ENCODE measurements at regions of chr18 and their contacts with region 1.

Region 1: DNA sequence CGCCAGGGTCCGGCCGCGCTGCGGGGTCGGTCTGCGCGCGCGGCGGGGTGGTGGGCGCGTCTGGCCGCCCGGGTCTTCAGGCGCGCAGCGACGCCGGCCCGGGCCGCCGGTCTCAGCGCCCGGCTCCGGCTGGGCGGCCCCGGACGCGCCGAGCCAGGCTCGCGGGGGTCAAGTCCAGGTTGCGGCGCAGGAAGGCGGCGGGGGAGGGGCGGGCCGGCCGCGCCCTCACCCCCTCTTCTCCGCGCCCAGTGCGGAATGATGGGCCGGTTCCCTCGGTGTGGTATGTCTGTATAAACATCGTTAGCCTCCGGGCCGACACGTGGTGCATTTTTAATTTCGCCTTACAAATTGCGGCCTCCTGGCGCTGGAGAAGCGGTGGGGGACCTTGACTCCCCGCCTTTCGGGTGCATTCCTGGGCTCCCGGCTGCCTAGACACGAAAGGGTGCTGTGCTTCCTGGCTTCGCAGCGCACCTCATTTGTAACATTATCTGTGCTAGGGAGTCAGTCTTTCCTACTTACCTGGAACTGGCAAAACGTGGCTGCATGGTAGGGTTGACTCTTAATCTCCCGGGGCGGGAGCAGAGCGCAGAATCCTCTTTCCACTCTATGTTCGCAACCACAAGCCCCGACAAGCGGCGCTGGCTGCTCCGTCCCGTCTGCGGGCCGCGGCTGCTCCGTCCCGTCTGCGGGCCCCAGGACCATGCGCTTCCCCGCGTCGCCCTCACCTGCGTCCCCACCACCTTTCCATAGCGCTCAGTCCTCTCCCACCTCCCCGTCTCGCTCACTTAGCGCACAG is 69.0 kb downstream of the CTAGE1 start:
- DNase-seq: peak; percentile 56
- H3K4me3 ChIP-seq: peak overlapping the region in 2 of 3 experiments; percentile 33 to 35
- H3K27ac ChIP-seq: peak overlapping the region; percentile 67
- H3K4me1 ChIP-seq: peaks cover 56% of the 10 kb centered on the region
- H3K27me3 ChIP-seq: no peaks in the 10 kb centered on the region
- CTCF ChIP-seq: no peak
- POLR2A ChIP-seq: no peak

Region 2: GRCh38 chr18:22194151-22194598 is 154.5 kb before region 1 on chr18:
- CTCF ChIA-PET with region 1: interaction called, 3 read pairs
- POLR2A ChIA-PET with region 1: no interaction called
- dilution Hi-C with region 1: no loop called
- intact Hi-C with region 1: loop called (anchors 5 kb)
- DNase-seq: peak; percentile 79
- H3K4me3 ChIP-seq: no peak overlapping the region
- H3K27ac ChIP-seq: peak overlapping the region; percentile 83
- H3K4me1 ChIP-seq: peaks cover 62% of the 10 kb centered on the region
- H3K27me3 ChIP-seq: no peaks in the 10 kb centered on the region
- CTCF ChIP-seq: no peak
- POLR2A ChIP-seq: no peak

Region 3: GRCh38 chr18:22314420-22314819 is 34.3 kb before region 1 on chr18:
- CTCF ChIA-PET with region 1: no interaction called
- POLR2A ChIA-PET with region 1: no interaction called
- dilution Hi-C with region 1: no loop called
- intact Hi-C with region 1: no loop called
- DNase-seq: no peak
- H3K4me3 ChIP-seq: no peak overlapping the region
- H3K27ac ChIP-seq: no peak overlapping the region
- H3K4me1 ChIP-seq: no peaks in the 10 kb centered on the region
- H3K27me3 ChIP-seq: no peaks in the 10 kb centered on the region
- CTCF ChIP-seq: no peak
- POLR2A ChIP-seq: no peak

Region 4: DNA sequence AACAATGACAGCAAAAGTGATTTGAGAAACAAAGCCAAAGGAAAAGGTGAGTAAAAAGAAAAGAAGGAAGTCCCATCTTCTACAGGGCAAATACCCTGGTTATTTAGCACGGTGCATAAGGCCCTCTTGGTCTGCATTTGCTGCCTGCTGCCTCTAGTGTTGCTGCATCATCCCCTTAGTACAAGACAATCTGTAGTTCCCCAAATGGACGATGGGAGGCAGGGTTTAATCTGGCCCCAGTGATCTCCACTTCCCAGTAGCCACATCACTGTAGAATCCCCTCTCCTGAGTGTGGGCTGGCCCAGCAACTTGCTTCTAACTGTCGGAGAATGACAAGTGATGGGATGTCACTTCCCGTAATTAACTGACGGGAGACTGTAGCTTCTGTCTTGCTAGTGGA is 16.1 kb before region 1 on chr18:
- CTCF ChIA-PET with region 1: interaction called, 12 read pairs
- POLR2A ChIA-PET with region 1: no interaction called
- dilution Hi-C with region 1: no loop called
- intact Hi-C with region 1: no loop called
- DNase-seq: no peak
- H3K4me3 ChIP-seq: no peak overlapping the region
- H3K27ac ChIP-seq: no peak overlapping the region
- H3K4me1 ChIP-seq: peaks cover 10% of the 10 kb centered on the region
- H3K27me3 ChIP-seq: no peaks in the 10 kb centered on the region
- CTCF ChIP-seq: no peak
- POLR2A ChIP-seq: no peak

Region 5: DNA sequence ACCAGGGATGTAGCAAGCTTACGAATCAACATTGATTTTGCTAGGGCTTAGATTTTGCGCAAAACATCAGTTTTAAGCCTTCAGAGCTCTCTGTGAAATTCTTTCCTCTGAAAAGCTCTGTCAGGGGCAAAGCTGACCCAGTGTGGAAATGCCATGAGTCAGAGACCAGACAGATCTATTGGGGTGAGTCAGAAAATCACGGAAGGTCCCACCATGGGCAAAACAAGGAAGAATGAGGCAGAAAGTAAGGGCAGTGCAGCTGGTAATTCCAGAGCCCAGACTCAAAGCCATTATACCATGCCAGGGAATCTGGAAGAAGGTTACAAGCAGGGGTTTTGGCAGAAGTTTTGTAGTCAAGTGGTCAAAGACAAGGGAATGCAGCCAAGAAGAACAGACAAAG is 325.6 kb after region 1 on chr18:
- CTCF ChIA-PET with region 1: no interaction called
- POLR2A ChIA-PET with region 1: no interaction called
- dilution Hi-C with region 1: no loop called
- intact Hi-C with region 1: loop called (anchors 5 kb)
- DNase-seq: peak; percentile 93
- H3K4me3 ChIP-seq: peak overlapping the region in 1 of 3 experiments; percentile 19
- H3K27ac ChIP-seq: peak overlapping the region; percentile 83
- H3K4me1 ChIP-seq: peaks cover 37% of the 10 kb centered on the region
- H3K27me3 ChIP-seq: no peaks in the 10 kb centered on the region
- CTCF ChIP-seq: no peak
- POLR2A ChIP-seq: no peak

Measured in endothelial cell of umbilical vein (primary cell).